Vagina (tissue), 2 donors: ENCODE measurements at regions of chr10 and their contacts with region 1.

Region 1: GRCh38 chr10:57759777-57760176 is 507.9 kb downstream of the IPMK start:
- DNase-seq: no peak
- H3K4me3 ChIP-seq: no peak overlapping the region
- H3K27ac ChIP-seq: no peak overlapping the region
- H3K4me1 ChIP-seq: no peaks in the 10 kb centered on the region
- H3K27me3 ChIP-seq: no peaks in the 10 kb centered on the region
- CTCF ChIP-seq: no peak
- POLR2A ChIP-seq: no peak

Region 2: DNA sequence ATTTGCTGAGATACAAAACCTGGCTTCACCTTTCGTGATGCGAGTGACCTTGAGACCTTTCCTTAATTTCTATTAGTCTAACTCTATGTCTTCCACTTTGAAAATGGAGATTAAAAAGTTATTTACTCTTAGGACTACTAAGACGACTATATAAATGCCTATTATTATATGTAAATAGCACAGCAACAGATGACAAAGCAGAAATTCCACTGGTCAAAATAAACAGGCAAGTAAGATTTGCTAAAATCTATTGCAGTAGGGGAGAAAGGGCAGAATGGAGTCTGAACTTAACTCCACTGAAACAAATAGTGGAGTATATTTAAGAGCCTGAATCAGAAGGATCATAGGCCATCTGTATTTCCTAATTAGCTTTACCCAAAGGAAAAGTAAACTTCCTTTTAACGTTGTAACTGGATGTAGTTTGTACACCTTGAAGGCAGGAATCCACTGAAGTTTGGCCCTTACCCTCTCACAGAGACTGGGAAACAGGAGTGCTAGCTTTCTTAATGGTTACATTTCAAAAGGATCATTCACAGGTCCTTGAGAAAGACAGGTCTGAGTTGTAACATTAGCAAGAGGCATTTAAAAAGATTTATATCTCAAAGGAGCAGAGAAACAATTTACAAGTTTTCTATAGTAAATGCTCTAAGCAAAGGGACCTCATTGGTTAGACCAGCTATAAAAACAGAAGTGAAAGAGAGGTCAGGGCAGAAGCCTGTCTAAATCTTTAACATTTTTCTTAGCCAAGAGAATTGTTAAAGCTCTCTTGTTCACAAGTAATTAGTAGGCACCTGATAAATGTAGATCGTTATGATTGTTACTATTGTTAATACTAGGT is 1731.3 kb before region 1 on chr10:
- intact Hi-C with region 1: loop called (anchors 5 kb)
- DNase-seq: no peak
- H3K4me3 ChIP-seq: no peak overlapping the region
- H3K27ac ChIP-seq: no peak overlapping the region
- H3K4me1 ChIP-seq: no peaks in the 10 kb centered on the region
- H3K27me3 ChIP-seq: no peaks in the 10 kb centered on the region
- CTCF ChIP-seq: no peak
- POLR2A ChIP-seq: no peak